HepG2 (cell line): ENCODE measurements at regions of chr11 and their contacts with region 1.

Region 1: GRCh38 chr11:130593064-130593463 is 144.6 kb downstream of the ADAMTS15 start:
- DNase-seq: no peak
- ATAC-seq: no peak
- H3K4me3 ChIP-seq: no peak overlapping the region
- H3K27ac ChIP-seq: no peak overlapping the region
- H3K4me1 ChIP-seq: no peaks in the 10 kb centered on the region
- H3K27me3 ChIP-seq: no peaks in the 10 kb centered on the region; a peak in 1 of 5 replicates
- CTCF ChIP-seq: no peak
- EP300 ChIP-seq: no peak
- POLR2A ChIP-seq: no peak
- RAD21 ChIP-seq: no peak

Region 2: GRCh38 chr11:130571947-130572584 is 21.0 kb before region 1 on chr11:
- CTCF ChIA-PET with region 1: no interaction called
- POLR2A ChIA-PET with region 1: no interaction called
- in situ Hi-C with region 1: no loop called
- intact Hi-C with region 1: loop called (anchors 1 kb)
- DNase-seq: no peak
- ATAC-seq: no peak
- H3K4me3 ChIP-seq: no peak overlapping the region
- H3K27ac ChIP-seq: no peak overlapping the region
- H3K4me1 ChIP-seq: no peaks in the 10 kb centered on the region
- H3K27me3 ChIP-seq: peaks cover 0 to 4% of the 10 kb centered on the region in 2 experiments; a peak in 1 of 5 replicates
- CTCF ChIP-seq: no peak
- EP300 ChIP-seq: no peak
- POLR2A ChIP-seq: no peak
- RAD21 ChIP-seq: no peak